PC-9 (cell line): ENCODE measurements at regions of chr13 and their contacts with region 1.

Region 1: DNA sequence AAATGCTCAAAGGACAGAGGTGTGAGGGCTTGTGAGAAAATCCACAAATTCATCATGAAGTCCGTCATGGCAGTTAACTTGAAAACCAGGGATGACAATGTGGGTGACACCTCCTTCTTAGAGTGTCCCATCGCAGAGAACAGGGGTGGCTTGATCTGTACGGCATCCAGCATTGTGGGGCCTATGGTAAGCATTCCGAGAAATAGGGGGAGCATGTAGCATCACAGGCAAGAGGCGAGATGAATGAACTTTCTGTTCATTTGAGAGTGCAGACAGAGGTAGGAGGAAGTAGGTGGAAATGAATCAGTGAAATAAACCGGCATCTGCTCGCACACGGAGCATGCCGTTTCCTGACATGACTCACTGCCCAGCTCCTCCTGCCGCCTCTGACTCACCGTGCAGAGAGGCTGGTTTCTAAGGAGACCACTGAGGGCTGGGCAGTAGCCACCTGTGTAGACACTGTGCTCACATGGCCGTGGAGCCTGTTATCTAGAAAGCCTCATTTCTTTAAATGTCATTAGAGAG is 339.0 kb downstream of the RFC3 start:
- DNase-seq: peak; percentile 82 to 97
- H3K4me3 ChIP-seq: peak overlapping the region; percentile 47; the same call in 1 of the 2 replicates
- H3K27ac ChIP-seq: peak overlapping the region; percentile 96
- H3K4me1 ChIP-seq: peaks cover 55% of the 10 kb centered on the region
- H3K27me3 ChIP-seq: no peaks in the 10 kb centered on the region
- CTCF ChIP-seq: no peak

Region 2: GRCh38 chr13:32969516-32969941 is 1187.4 kb before region 1 on chr13:
- CTCF ChIA-PET with region 1: no interaction called
- POLR2A ChIA-PET with region 1: no interaction called
- intact Hi-C with region 1: no loop called
- DNase-seq: no peak
- H3K4me3 ChIP-seq: no peak overlapping the region
- H3K27ac ChIP-seq: no peak overlapping the region
- H3K4me1 ChIP-seq: no peaks in the 10 kb centered on the region
- H3K27me3 ChIP-seq: no peaks in the 10 kb centered on the region
- CTCF ChIP-seq: no peak

Region 3: DNA sequence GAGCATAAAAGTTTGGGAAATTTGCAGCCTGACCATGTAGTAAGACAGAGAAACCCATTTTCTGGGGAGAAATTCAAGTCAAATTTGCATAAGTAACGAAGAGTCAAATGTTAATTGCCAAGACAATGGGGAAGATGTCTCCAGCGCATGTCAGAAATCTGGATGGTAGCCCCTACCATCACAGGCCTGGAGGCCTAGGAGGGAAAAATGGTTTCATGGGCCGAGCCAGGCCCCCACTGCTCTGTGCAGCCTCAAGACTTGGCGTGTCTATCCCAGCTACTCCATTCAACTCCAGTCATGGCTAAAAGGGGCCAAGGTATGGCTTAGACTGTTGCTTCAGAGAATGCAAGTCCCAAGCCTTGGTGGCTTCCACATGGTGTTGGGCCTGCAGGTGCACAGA is 69.1 kb before region 1 on chr13:
- CTCF ChIA-PET with region 1: no interaction called
- POLR2A ChIA-PET with region 1: interaction called, 15 read pairs
- intact Hi-C with region 1: no loop called
- DNase-seq: no peak
- H3K4me3 ChIP-seq: no peak overlapping the region
- H3K27ac ChIP-seq: no peak overlapping the region
- H3K4me1 ChIP-seq: no peaks in the 10 kb centered on the region
- H3K27me3 ChIP-seq: no peaks in the 10 kb centered on the region
- CTCF ChIP-seq: no peak

Region 4: GRCh38 chr13:34114581-34114980 is 42.3 kb before region 1 on chr13:
- CTCF ChIA-PET with region 1: no interaction called
- POLR2A ChIA-PET with region 1: no interaction called
- intact Hi-C with region 1: no loop called
- DNase-seq: no peak
- H3K4me3 ChIP-seq: no peak overlapping the region
- H3K27ac ChIP-seq: no peak overlapping the region
- H3K4me1 ChIP-seq: no peaks in the 10 kb centered on the region
- H3K27me3 ChIP-seq: no peaks in the 10 kb centered on the region
- CTCF ChIP-seq: no peak

Region 5: DNA sequence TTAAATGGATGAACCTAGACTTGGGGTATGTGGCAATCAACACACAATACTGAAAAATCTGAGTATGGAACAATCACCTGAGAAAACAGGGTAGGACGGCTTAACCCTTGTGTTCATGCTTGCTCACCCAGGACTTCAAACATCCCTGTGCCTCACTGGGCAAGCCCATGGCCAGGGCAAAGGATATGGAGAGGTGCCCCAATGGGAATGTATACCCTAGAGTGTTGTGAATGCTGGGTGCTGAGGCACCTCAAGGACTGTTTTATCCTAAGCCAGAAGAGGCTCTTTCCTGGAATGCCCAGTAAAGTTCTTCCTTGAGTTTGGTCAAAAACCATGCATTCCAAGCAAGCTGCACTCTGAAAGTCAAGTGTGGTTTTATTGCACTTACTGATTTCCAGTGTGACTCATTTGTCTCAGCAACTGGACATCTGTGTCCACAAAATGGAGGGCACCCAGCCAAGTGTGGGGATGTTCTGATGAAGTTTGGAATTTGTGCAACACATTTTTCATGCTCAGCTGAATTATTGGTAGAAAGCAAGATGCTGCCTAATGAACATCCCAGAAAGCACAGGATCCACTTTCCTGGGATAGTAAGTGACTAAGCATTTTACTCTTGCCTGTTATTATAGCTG is 192.3 kb after region 1 on chr13:
- CTCF ChIA-PET with region 1: no interaction called
- POLR2A ChIA-PET with region 1: interaction called, 3 read pairs
- intact Hi-C with region 1: loop called (anchors 1 kb)
- DNase-seq: peak; percentile 68 to 91
- H3K4me3 ChIP-seq: no peak overlapping the region
- H3K27ac ChIP-seq: peak overlapping the region; percentile 88
- H3K4me1 ChIP-seq: peaks cover 50% of the 10 kb centered on the region
- H3K27me3 ChIP-seq: no peaks in the 10 kb centered on the region
- CTCF ChIP-seq: no peak

Region 6: GRCh38 chr13:34863360-34864135 is 706.6 kb after region 1 on chr13:
- CTCF ChIA-PET with region 1: no interaction called
- POLR2A ChIA-PET with region 1: no interaction called
- intact Hi-C with region 1: loop called (anchors 10 kb)
- DNase-seq: peak; percentile 42 to 98
- H3K4me3 ChIP-seq: peak overlapping the region; percentile 8; the same call in 1 of the 2 replicates
- H3K27ac ChIP-seq: peak overlapping the region; percentile 71
- H3K4me1 ChIP-seq: peaks cover 41% of the 10 kb centered on the region
- H3K27me3 ChIP-seq: no peaks in the 10 kb centered on the region
- CTCF ChIP-seq: no peak